GM12878 (cell line): ENCODE measurements at regions of chr10 and their contacts with region 1.

Region 1: DNA sequence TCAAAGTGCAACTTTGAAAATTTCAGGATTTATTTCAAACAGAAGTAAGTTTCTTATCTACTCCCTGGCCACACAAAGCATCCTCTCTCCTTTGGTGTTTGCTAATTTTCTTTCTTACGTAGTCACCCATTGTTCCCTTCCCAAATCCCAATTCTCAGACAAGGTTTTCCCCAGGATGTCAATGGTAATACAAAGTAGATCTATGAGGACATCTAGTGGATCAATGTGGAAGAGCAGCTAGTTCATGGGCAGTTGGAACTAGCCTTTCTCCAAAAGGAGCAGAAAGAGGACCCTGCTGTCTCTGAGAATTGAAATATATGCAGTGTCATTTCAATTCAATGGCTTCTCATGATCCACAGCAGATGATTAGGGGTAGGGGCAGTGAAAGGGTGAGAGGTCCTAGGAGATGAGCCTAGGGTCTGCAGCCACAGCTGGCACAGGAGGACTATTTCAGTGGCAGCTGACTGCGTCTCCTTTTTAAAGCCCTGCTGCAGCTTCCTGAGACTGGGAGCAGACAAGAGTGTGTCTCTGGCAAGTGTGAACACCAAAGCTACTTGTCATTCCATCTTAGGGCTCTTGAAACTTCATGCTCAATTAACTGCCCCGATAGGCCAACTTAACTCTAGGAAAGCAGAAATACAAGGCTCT is 632.6 kb downstream of the KCNMA1 start:
- DNase-seq: no peak
- ATAC-seq: peak; percentile 53; the same call in 2 of the 3 replicates
- H3K4me3 ChIP-seq: no peak overlapping the region
- H3K27ac ChIP-seq: no peak overlapping the region
- H3K4me1 ChIP-seq: no peaks in the 10 kb centered on the region
- H3K27me3 ChIP-seq: no peaks in the 10 kb centered on the region
- CTCF ChIP-seq: peak; percentile 68 to 76 (median 75)
- EP300 ChIP-seq: no peak
- POLR2A ChIP-seq: no peak
- RAD21 ChIP-seq: peak; percentile 60

Region 2: GRCh38 chr10:76991621-76992020 is 13.4 kb before region 1 on chr10:
- CTCF ChIA-PET with region 1: interaction called, 20 read pairs
- POLR2A ChIA-PET with region 1: no interaction called
- RAD21 ChIA-PET with region 1: no interaction called
- SMC1A ChIA-PET with region 1: interaction called, 9 read pairs
- in situ Hi-C with region 1: no loop called
- intact Hi-C with region 1: no loop called
- DNase-seq: no peak
- ATAC-seq: no peak
- H3K4me3 ChIP-seq: no peak overlapping the region
- H3K27ac ChIP-seq: no peak overlapping the region
- H3K4me1 ChIP-seq: no peaks in the 10 kb centered on the region
- H3K27me3 ChIP-seq: no peaks in the 10 kb centered on the region
- CTCF ChIP-seq: no peak
- EP300 ChIP-seq: no peak
- POLR2A ChIP-seq: no peak
- RAD21 ChIP-seq: no peak

Region 3: GRCh38 chr10:77021966-77022490 is 17.0 kb after region 1 on chr10:
- CTCF ChIA-PET with region 1: interaction called, 11 read pairs
- POLR2A ChIA-PET with region 1: no interaction called
- RAD21 ChIA-PET with region 1: interaction called, 6 read pairs
- SMC1A ChIA-PET with region 1: interaction called, 11 read pairs
- in situ Hi-C with region 1: no loop called
- intact Hi-C with region 1: no loop called
- DNase-seq: no peak
- ATAC-seq: no peak
- H3K4me3 ChIP-seq: no peak overlapping the region
- H3K27ac ChIP-seq: no peak overlapping the region
- H3K4me1 ChIP-seq: no peaks in the 10 kb centered on the region
- H3K27me3 ChIP-seq: no peaks in the 10 kb centered on the region
- CTCF ChIP-seq: no peak
- EP300 ChIP-seq: no peak
- POLR2A ChIP-seq: no peak
- RAD21 ChIP-seq: no peak

Region 4: GRCh38 chr10:77027576-77027975 is 22.5 kb after region 1 on chr10:
- CTCF ChIA-PET with region 1: interaction called, 11 read pairs
- POLR2A ChIA-PET with region 1: no interaction called
- RAD21 ChIA-PET with region 1: interaction called, 6 read pairs
- SMC1A ChIA-PET with region 1: interaction called, 11 read pairs
- in situ Hi-C with region 1: no loop called
- intact Hi-C with region 1: no loop called
- DNase-seq: peak; percentile 32
- ATAC-seq: peak; percentile 92
- H3K4me3 ChIP-seq: no peak overlapping the region
- H3K27ac ChIP-seq: no peak overlapping the region
- H3K4me1 ChIP-seq: no peaks in the 10 kb centered on the region
- H3K27me3 ChIP-seq: no peaks in the 10 kb centered on the region
- CTCF ChIP-seq: no peak
- EP300 ChIP-seq: no peak
- POLR2A ChIP-seq: no peak
- RAD21 ChIP-seq: no peak

Region 5: DNA sequence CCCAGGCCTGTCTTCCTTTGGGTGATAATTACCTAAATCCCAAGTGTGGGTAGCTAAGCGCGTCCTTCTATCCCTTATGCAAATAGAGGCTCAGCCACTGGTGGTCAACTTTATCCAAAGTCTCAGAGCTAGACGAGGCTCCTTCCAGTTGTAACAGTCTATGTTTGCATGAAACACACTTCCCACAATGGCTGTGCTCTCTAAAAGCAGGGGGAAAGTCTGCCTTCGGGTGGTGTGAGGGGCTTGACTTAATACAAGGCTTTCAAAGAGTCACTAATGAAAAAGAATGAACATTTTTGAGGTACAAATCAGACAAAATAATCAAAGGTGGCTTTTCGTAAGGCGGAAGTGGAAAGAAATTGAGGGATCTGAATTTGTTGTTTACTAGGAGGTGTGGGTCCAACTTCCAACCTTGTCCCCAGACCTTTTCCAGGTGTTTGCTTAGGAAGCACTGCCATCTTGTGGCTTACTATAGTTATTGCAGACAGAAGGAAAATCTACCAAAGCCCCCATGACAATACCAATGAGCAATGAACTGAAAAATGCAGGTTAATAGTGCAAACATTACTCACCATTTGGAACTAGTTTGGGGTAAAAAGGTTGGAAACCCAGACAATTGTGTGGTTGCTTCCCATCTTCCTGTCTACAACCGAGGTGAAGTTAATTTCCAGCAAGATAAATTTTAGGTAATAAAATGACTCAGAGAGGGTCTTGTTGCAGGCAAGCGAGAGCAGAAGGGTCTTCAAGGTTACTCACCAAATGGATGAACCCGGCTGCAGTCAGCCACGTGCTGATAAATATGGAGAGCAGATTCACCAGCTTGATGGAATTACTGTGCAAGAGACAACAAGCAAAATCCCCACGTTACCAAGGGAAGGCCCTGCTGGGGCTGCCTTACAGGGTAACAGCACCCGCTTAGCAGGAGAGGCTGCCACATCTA is 106.8 kb after region 1 on chr10:
- CTCF ChIA-PET with region 1: interaction called, 12 read pairs
- POLR2A ChIA-PET with region 1: no interaction called
- RAD21 ChIA-PET with region 1: interaction called, 5 read pairs
- SMC1A ChIA-PET with region 1: interaction called, 4 read pairs
- in situ Hi-C with region 1: no loop called
- intact Hi-C with region 1: loop called (anchors 5 kb)
- DNase-seq: peak; percentile 13
- ATAC-seq: peak; percentile 82
- H3K4me3 ChIP-seq: no peak overlapping the region
- H3K27ac ChIP-seq: no peak overlapping the region
- H3K4me1 ChIP-seq: no peaks in the 10 kb centered on the region
- H3K27me3 ChIP-seq: no peaks in the 10 kb centered on the region
- CTCF ChIP-seq: peak; percentile 70 to 76 (median 73); a peak in 5 of 6 replicates
- EP300 ChIP-seq: no peak
- POLR2A ChIP-seq: no peak
- RAD21 ChIP-seq: peak; percentile 83

Region 6: DNA sequence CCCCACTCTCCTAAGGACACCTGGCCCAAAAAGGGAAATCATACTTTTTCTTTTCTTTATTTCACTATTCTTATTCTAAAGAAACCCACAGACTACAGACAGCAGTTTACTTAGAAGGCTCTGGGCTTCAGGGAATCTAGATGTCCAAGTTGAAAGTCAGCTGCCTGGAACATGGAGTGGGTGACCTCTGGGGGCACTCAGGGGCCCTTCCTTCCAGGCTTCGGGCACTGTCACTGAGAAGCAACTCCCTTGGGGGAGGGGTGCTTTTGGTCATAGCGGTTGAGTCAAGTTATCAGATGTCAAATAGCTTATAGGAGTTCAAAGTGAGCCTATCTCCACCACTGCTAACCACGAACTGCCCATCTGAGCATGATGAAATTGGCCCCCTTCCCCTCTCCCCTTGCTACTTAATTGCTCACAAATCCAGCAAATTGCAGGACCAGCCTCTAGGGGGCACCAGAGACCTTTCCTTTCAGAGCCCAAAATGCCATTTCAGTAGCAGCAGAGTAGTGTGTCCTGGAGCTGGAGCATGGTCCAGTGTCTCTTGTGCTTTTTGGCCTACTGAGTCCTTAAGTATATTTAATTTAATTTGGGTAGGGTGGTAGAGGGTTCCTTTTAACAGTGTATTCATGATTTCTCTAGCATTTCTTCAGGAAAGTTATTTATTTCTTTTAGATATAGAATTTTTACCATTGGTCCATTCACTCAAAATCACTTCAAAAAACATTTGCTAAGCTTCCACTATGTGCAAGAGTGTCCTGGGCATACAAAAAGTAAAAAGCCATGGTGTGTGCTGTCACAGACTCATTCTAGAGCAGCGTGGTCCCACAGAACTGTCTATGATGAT is 168.8 kb after region 1 on chr10:
- CTCF ChIA-PET with region 1: no interaction called
- POLR2A ChIA-PET with region 1: no interaction called
- RAD21 ChIA-PET with region 1: no interaction called
- SMC1A ChIA-PET with region 1: no interaction called
- in situ Hi-C with region 1: no loop called
- intact Hi-C with region 1: no loop called
- DNase-seq: peak; percentile 28
- ATAC-seq: peak; percentile 84
- H3K4me3 ChIP-seq: no peak overlapping the region
- H3K27ac ChIP-seq: no peak overlapping the region
- H3K4me1 ChIP-seq: no peaks in the 10 kb centered on the region
- H3K27me3 ChIP-seq: no peaks in the 10 kb centered on the region
- CTCF ChIP-seq: peak; percentile 80 to 96 (median 81); a peak in 5 of 6 replicates
- EP300 ChIP-seq: no peak
- POLR2A ChIP-seq: no peak
- RAD21 ChIP-seq: peak; percentile 96